ENCODE measurements at regions of chr11 and their contacts with region 1.

Region 1: GRCh38 chr11:22337596-22338485 is at the start of gene SLC17A6:
- DNase-seq: peak in 1 of 2 donors; percentile 28
- ATAC-seq: peak in 2 of 8 donors; percentile 35 to 55
- H3K4me3 ChIP-seq: no peak within 1 kb of the TSS
- H3K27ac ChIP-seq: no peak within 1 kb of the TSS
- H3K4me1 ChIP-seq: peaks cover 0 to 8% (median 0%) of the 10 kb centered on the region in 9 donors
- H3K27me3 ChIP-seq: peaks cover 19 to 77% (median 71%) of the 10 kb centered on the region in 7 donors
- CTCF ChIP-seq: no peak
- total RNA-seq, gene SLC17A6: not detected

Region 2: GRCh38 chr11:22459048-22459447 is 121.2 kb after region 1 on chr11:
- intact Hi-C with region 1: loop called in 1 of 10 experiments (anchors 10 kb)
- DNase-seq: no peak
- ATAC-seq: peak in 1 of 8 donors; percentile 27
- H3K4me3 ChIP-seq: no peak overlapping the region
- H3K27ac ChIP-seq: no peak overlapping the region
- H3K4me1 ChIP-seq: no peaks in the 10 kb centered on the region
- H3K27me3 ChIP-seq: no peaks in the 10 kb centered on the region
- CTCF ChIP-seq: no peak

Region 3: DNA sequence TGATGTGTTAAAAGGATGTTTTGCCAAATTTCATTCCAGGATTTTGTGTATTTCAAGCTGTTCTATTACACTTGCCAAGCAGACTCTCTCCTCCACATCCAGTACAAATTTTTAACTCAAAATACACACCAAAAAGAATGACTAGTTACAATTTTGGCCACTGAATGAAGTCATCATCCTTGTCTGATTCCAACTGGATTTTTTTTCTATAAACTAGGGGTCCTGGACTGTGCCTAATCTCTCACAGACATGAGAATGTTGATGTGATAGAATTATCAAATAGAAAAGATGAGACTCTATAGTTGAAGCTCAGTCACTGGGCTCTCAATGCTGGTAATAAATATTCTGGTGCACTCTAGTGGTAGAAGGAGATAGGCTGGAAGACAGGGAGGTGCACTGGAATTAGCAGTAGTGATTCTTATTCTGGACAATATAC is 202.0 kb after region 1 on chr11:
- intact Hi-C with region 1: loop called in 6 of 10 experiments (anchors 2 to 10 kb)
- DNase-seq: no peak
- ATAC-seq: peak in 1 of 8 donors; percentile 43
- H3K4me3 ChIP-seq: no peak overlapping the region
- H3K27ac ChIP-seq: no peak overlapping the region
- H3K4me1 ChIP-seq: no peaks in the 10 kb centered on the region
- H3K27me3 ChIP-seq: peaks cover 0 to 9% (median 0%) of the 10 kb centered on the region in 7 donors
- CTCF ChIP-seq: peak in 8 of 9 donors; percentile 18 to 63 (median 47)

Region 4: GRCh38 chr11:22787551-22788162 is 449.8 kb after region 1 on chr11:
- intact Hi-C with region 1: loop called (anchors 1 to 5 kb)
- DNase-seq: no peak
- ATAC-seq: no peak
- H3K4me3 ChIP-seq: no peak overlapping the region
- H3K27ac ChIP-seq: no peak overlapping the region
- H3K4me1 ChIP-seq: peaks cover 0 to 4% (median 0%) of the 10 kb centered on the region in 9 donors
- H3K27me3 ChIP-seq: no peaks in the 10 kb centered on the region
- CTCF ChIP-seq: peak; percentile 45 to 85 (median 76)